MCF 10A (cell line): ENCODE measurements at regions of chr1 and their contacts with region 1.

Region 1: GRCh38 chr1:26723013-26723991 is 27.5 kb downstream of the ARID1A start:
- DNase-seq: peak; percentile 96
- H3K4me3 Mint-ChIP-seq: peak overlapping the region; percentile 28
- H3K27ac Mint-ChIP-seq: peak overlapping the region; percentile 78
- H3K4me1 Mint-ChIP-seq: peaks cover 48% of the 10 kb centered on the region
- H3K27me3 Mint-ChIP-seq: no peaks in the 10 kb centered on the region
- CTCF ChIP-seq: no peak

Region 2: DNA sequence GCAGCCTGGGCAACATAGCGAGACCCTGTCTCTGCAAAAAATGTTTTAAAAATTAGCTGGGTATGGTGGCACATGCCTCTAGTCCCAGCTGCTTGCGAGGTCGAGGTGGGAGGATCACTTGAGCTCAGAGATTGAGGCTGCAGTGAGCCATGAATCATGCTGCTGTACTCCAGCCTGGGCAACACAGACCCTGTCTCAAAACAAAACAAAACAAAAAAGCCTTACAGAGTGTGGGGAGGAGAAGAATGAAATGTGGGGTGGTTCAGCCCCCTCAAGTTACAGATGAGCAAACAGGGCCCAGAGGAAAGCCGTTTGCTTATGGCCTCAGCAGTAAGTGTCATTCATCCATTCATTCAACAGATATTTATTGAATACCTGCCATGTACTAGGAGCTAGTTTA is 153.0 kb before region 1 on chr1:
- CTCF ChIA-PET with region 1: no interaction called
- POLR2A ChIA-PET with region 1: no interaction called
- intact Hi-C with region 1: no loop called
- DNase-seq: no peak
- H3K4me3 Mint-ChIP-seq: no peak overlapping the region
- H3K27ac Mint-ChIP-seq: no peak overlapping the region
- H3K4me1 Mint-ChIP-seq: no peaks in the 10 kb centered on the region
- H3K27me3 Mint-ChIP-seq: no peaks in the 10 kb centered on the region
- CTCF ChIP-seq: no peak

Region 3: DNA sequence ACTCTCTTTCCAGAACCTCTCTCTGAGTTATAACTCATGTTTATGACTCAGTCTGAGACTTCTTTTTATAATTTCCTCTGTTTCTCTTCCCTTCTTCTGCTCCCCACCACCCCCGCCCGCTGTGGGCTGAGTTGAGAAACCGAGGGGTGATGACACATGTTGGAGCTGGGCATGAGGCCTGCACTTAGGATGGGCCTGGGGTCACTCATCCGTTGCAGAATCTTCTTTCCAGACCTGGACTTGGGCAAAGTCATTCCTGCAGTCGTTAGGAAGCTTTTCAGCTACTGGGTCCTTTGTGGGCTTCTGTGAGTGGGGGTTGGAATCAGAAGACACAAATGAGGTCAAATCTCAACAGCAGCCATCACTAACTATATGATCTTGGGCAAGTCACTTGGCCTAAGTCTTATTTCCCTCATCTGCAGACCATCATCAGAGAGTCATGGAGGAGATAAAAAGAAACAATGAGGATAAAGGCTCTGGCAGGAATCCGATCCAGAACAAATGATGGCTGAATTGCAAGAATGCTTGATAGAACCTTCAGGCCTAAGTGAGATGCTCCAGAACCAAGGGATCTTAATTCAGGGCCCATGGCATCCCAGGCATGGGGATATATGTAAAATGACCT is 140.4 kb before region 1 on chr1:
- CTCF ChIA-PET with region 1: no interaction called
- POLR2A ChIA-PET with region 1: no interaction called
- intact Hi-C with region 1: no loop called
- DNase-seq: peak; percentile 69
- H3K4me3 Mint-ChIP-seq: no peak overlapping the region
- H3K27ac Mint-ChIP-seq: no peak overlapping the region
- H3K4me1 Mint-ChIP-seq: peaks cover 5% of the 10 kb centered on the region
- H3K27me3 Mint-ChIP-seq: no peaks in the 10 kb centered on the region
- CTCF ChIP-seq: no peak

Region 4: GRCh38 chr1:26645734-26646133 is 77.6 kb before region 1 on chr1:
- CTCF ChIA-PET with region 1: no interaction called
- POLR2A ChIA-PET with region 1: no interaction called
- intact Hi-C with region 1: no loop called
- DNase-seq: no peak
- H3K4me3 Mint-ChIP-seq: no peak overlapping the region
- H3K27ac Mint-ChIP-seq: no peak overlapping the region
- H3K4me1 Mint-ChIP-seq: no peaks in the 10 kb centered on the region
- H3K27me3 Mint-ChIP-seq: no peaks in the 10 kb centered on the region
- CTCF ChIP-seq: no peak

Region 5: GRCh38 chr1:26700711-26701110 is 22.6 kb before region 1 on chr1:
- CTCF ChIA-PET with region 1: interaction called, 4 read pairs
- POLR2A ChIA-PET with region 1: interaction called, 40 read pairs
- intact Hi-C with region 1: loop called (anchors 1 kb)
- DNase-seq: no peak
- H3K4me3 Mint-ChIP-seq: no peak overlapping the region
- H3K27ac Mint-ChIP-seq: no peak overlapping the region
- H3K4me1 Mint-ChIP-seq: peaks cover 10% of the 10 kb centered on the region
- H3K27me3 Mint-ChIP-seq: no peaks in the 10 kb centered on the region
- CTCF ChIP-seq: no peak

Region 6: GRCh38 chr1:26705788-26706311 is 17.5 kb before region 1 on chr1:
- CTCF ChIA-PET with region 1: interaction called, 4 read pairs
- POLR2A ChIA-PET with region 1: interaction called, 27 read pairs
- intact Hi-C with region 1: no loop called
- DNase-seq: peak; percentile 57
- H3K4me3 Mint-ChIP-seq: peak overlapping the region; percentile 30
- H3K27ac Mint-ChIP-seq: peak overlapping the region; percentile 63
- H3K4me1 Mint-ChIP-seq: peaks cover 28% of the 10 kb centered on the region
- H3K27me3 Mint-ChIP-seq: no peaks in the 10 kb centered on the region
- CTCF ChIP-seq: no peak

Region 7: DNA sequence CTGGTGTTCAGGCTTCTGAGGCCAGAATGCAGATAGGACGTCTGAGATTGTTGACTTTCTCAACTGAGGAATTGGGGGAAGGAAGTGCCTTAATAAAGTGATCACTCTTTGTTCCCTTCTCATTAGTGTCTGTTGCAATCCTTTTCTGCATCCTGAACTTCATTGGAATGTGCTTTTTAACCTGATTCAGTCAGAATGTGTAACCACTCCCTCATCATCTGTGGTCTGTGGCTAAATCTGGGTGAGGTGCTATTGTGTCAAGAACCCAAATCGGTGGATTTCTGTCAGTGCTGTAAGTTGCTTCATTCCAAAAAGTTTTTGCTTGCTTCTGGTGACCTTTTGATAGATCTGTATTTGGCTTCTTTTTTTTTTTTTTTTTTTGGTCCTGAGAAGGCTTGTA is 10.7 kb after region 1 on chr1:
- CTCF ChIA-PET with region 1: interaction called, 3 read pairs
- POLR2A ChIA-PET with region 1: interaction called, 10 read pairs
- intact Hi-C with region 1: no loop called
- DNase-seq: peak; percentile 72
- H3K4me3 Mint-ChIP-seq: no peak overlapping the region
- H3K27ac Mint-ChIP-seq: no peak overlapping the region
- H3K4me1 Mint-ChIP-seq: peaks cover 25% of the 10 kb centered on the region
- H3K27me3 Mint-ChIP-seq: no peaks in the 10 kb centered on the region
- CTCF ChIP-seq: no peak

Region 8: DNA sequence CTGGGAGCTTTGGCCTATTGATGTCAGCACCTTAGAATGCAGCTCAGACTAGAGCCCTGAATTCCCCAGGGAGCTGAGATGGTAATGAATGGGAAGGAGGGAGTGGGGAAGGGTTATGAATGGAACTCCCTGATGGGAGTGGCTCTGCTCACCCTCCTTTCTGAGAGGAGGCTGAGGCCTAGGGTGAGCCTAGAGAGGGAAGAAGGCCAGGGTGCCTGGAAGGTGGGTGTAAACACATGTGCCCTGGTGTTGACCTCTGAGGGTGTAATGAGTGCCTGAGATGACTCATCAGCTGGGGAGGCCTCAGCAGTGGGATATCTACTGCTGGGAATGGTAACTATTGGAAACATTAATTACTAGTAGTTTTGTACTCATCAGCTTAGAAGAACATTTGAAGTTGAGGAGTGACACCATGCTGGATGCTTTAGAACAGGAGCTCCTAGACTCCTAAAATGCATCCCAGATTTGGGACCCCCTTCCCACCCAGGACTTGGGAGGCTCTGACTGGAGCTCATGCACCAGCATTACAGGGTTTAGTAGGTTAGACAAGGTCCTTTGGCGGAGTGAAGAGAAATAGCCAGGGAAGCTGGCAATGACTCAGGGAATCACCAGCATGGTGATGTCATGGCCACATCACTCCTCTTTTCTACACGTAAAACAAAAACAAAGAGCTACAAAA is 48.5 kb after region 1 on chr1:
- CTCF ChIA-PET with region 1: no interaction called
- POLR2A ChIA-PET with region 1: interaction called, 4 read pairs
- intact Hi-C with region 1: loop called (anchors 5 kb)
- DNase-seq: peak; percentile 95
- H3K4me3 Mint-ChIP-seq: no peak overlapping the region
- H3K27ac Mint-ChIP-seq: no peak overlapping the region
- H3K4me1 Mint-ChIP-seq: peaks cover 38% of the 10 kb centered on the region
- H3K27me3 Mint-ChIP-seq: no peaks in the 10 kb centered on the region
- CTCF ChIP-seq: no peak